Sciatic nerve (tissue), 2 donors: ENCODE measurements at regions of chr1 and their contacts with region 1.

Region 1: DNA sequence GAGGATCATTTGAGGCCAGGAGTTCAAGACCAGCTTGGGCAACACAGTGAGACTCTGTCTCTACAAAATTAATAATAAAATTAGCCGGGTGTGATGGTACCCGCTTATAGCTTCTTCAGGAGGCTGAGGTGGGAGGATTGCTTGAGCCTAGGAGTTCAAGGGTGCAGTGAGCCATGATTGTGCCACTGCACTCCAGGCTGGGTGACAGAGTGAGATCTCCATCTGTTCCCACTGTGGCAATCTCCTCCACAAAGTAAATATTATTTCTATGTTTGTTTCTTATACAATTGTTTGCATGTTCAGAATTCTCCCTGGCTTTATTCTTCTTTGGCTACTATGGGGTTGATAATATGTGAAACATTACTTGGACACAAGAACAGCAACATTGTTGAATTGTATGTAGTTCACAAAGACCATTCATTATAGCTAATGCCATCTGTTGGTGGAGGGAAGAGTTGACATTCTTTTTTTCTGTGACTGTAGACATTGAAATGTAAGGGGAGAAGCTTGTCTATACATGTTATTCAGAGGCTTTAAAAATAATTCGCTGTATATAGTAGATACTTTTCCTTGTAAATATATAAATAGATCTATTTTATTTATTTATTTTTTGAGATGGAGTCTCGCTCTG is 47.8 kb upstream of the SRSF10 start:
- DNase-seq: no peak
- ATAC-seq: peak; percentile 71

Region 2: GRCh38 chr1:23908493-23909341 is 119.2 kb before region 1 on chr1:
- intact Hi-C with region 1: no loop called
- DNase-seq: no peak
- ATAC-seq: peak; percentile 62

Region 3: DNA sequence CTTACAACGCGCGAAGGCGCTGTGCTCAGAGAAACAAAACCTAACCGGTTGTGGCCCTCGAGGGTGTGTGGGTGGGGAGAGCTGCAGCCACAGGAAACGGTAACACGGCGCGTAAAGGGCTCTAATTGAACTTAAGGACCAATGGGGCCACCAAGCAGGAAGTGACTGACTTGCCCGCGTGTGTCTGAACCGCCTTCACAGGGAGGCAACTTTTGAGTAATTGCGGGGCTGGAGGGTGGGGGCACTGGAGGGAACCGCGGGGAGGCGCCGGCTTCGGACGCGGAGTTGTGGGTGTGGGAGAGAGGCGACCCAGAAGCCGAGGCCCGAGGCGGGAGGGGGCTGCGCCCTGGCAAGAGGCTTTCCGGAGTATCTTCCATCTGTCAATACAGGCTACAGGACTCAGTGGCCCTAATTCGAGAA is 68.9 kb before region 1 on chr1:
- intact Hi-C with region 1: loop called (anchors 5 kb)
- DNase-seq: peak; percentile 85
- ATAC-seq: peak; percentile 77

Region 4: DNA sequence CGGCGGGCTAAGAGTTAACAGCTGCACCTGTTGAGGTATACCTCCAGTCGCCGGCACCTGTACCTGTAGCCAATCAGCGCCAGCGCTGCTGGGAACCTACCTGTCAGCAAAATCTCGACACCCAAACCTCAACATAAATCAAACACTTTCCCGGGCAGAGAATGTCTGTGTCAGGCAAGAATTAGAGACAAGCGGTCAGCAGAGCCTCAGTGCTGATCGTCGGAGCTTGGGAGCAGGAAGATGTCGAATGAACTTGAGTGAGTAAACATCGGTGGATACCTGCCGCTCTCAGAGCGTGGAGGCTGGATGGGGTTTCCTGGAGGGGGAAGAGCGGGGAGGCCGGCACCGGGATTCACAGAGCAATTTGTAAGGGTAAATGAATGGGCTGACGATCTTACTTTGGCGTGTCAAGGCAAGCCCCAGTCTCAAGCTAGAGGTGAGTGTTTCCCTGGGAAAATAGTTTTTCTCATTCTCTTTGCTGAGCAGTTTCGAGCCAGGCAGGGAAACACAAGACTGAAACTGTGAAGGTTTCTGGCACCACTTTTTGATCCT is 291.4 kb after region 1 on chr1 and contains the start of gene GRHL3:
- intact Hi-C with region 1: no loop called
- DNase-seq: no peak
- ATAC-seq: no peak
- total RNA-seq, gene GRHL3: not detected